Activated CD4-positive, alpha-beta T cell treated with anti-CD3 and anti-CD28 coated beads, Interleukin-2, amount 10 ng/mL, durations not matched to agents 7 days and 5 days (primary cell): ENCODE measurements at regions of chr10 and their contacts with region 1.

Region 1: GRCh38 chr10:133278577-133279265 is 2.1 kb upstream of the ADAM8 start:
- DNase-seq: peak; percentile 64
- H3K4me3 Mint-ChIP-seq: peak overlapping the region; percentile 75
- H3K27ac Mint-ChIP-seq: peak overlapping the region; percentile 96
- H3K4me1 Mint-ChIP-seq: peaks cover 35% of the 10 kb centered on the region
- H3K27me3 Mint-ChIP-seq: no peaks in the 10 kb centered on the region

Region 2: GRCh38 chr10:133261726-133262325 is 16.9 kb before region 1 on chr10:
- CTCF ChIA-PET with region 1: interaction called, 18 read pairs
- POLR2A ChIA-PET with region 1: interaction called, 4 read pairs
- DNase-seq: peak; percentile 86
- H3K4me3 Mint-ChIP-seq: peak overlapping the region; percentile 75
- H3K27ac Mint-ChIP-seq: peak overlapping the region; percentile 76
- H3K4me1 Mint-ChIP-seq: peaks cover 82% of the 10 kb centered on the region
- H3K27me3 Mint-ChIP-seq: no peaks in the 10 kb centered on the region

Region 3: DNA sequence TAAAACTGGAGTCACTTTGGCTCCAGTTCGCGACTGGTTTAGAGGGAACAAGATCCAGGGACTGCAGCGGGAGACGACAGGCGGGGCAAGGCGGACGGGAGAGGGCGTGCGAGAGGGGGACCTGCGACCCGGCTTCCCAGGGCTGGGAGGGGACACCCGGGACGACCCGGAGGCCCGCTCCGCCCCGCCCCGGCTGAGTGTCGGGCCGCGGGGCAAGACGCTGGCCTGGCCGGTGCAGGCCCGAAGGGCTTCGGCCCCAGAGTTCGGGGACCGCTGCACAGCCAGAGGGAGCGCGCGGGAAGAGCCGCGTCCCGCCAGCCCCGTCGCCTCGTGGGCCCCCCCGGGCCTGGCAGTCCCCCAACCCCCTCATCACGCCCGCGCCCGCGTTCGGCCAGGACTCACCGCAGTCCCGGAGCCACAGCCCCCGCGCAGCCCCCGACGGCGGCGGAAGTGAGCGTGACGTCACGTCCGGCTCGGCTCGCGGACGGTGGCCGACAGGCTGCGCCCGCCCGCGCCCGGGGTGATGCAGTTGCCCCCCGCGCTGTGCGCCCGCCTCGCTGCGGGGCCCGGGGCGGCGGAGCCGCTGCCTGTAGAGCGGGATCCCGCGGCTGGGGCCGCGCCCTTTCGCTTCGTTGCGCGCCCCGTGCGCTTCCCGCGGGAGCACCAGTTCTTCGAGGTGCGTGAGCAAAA is 29.8 kb after region 1 on chr10 and contains the starts of genes TUBGCP2 and ZNF511:
- CTCF ChIA-PET with region 1: interaction called, 14 read pairs
- POLR2A ChIA-PET with region 1: no interaction called
- DNase-seq: peak; percentile 88
- H3K4me3 Mint-ChIP-seq: peak within 1 kb of the TSS; percentile 96
- H3K27ac Mint-ChIP-seq: peak within 1 kb of the TSS; percentile 99
- H3K4me1 Mint-ChIP-seq: peaks cover 27% of the 10 kb centered on the region
- H3K27me3 Mint-ChIP-seq: no peaks in the 10 kb centered on the region
- total RNA-seq, gene TUBGCP2: 52.4 to 54.2 TPM
- total RNA-seq, gene ZNF511: 54.5 to 59.7 TPM